Activated CD8-positive, alpha-beta T cell treated with anti-CD3 and anti-CD28 coated beads, Interleukin-2, amount 10 ng/mL, durations not matched to agents 7 days and 5 days (primary cell): ENCODE measurements at regions of chr12 and their contacts with region 1.

Region 1: DNA sequence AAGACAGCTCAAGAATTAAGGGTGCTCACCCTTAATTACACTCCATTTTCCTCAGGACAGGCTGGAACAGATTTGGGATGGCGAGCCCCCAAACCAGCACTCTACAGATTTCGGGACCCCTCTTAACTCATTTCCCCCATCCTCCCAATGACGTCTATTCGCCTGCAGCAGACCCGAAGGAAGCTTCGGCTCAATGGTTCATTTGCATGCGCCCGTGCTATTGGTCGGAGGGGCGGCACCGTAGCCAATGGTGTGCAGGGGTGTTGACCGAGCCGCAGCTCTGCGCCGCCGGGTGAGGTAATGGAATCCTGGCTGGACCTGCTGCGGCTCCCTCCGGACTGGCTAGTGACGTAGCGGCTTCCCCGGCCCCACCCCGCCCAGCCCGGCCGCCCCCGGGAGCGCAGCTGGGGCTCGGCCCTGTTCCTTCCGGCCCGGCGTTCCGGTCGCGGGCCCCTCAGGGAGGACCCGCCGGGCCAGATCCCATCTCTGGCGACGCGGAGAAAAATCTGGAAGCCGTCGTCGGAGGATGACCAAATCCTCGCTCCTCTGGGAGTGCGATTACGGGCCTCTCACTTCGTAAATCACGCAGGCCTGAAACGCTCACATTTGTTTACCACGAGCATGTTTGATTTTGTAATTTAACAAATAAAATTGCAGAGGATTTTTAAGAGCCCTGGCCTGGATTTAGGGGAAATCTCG is 18.3 kb upstream of the NR4A1 start:
- DNase-seq: peak; percentile 95
- ATAC-seq: peak; percentile 91
- H3K4me3 Mint-ChIP-seq: peak overlapping the region; percentile 73
- H3K27ac Mint-ChIP-seq: peak overlapping the region; percentile 84
- H3K4me1 Mint-ChIP-seq: peaks cover 39% of the 10 kb centered on the region
- H3K27me3 Mint-ChIP-seq: peaks cover 11% of the 10 kb centered on the region

Region 2: DNA sequence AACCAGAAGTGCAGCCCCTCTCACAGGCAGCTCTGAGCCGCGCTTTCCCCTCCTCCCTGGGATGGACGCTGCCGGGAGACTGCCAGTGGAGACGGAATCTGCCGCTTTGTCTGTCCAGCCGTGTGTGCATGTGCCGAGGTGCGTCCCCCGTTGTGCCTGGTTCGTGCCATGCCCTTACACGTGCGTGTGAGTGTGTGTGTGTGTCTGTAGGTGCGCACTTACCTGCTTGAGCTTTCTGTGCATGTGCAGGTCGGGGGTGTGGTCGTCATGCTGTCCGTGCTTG is 38.5 kb before region 1 on chr12:
- CTCF ChIA-PET with region 1: interaction called, 11 read pairs
- POLR2A ChIA-PET with region 1: no interaction called
- DNase-seq: no peak
- ATAC-seq: no peak
- H3K4me3 Mint-ChIP-seq: no peak overlapping the region
- H3K27ac Mint-ChIP-seq: no peak overlapping the region
- H3K4me1 Mint-ChIP-seq: peaks cover 7% of the 10 kb centered on the region
- H3K27me3 Mint-ChIP-seq: no peaks in the 10 kb centered on the region

Region 3: GRCh38 chr12:52050761-52051541 is 18.0 kb after region 1 on chr12 and contains the start of gene NR4A1:
- CTCF ChIA-PET with region 1: interaction called, 290 read pairs
- POLR2A ChIA-PET with region 1: interaction called, 10 read pairs
- DNase-seq: peak; percentile 98
- ATAC-seq: peak; percentile 85
- H3K4me3 Mint-ChIP-seq: peak within 1 kb of the TSS; percentile 86
- H3K27ac Mint-ChIP-seq: peak within 1 kb of the TSS; percentile 98
- H3K4me1 Mint-ChIP-seq: peaks cover 49% of the 10 kb centered on the region
- H3K27me3 Mint-ChIP-seq: no peaks in the 10 kb centered on the region
- total RNA-seq, gene NR4A1: 4.3 to 5.6 TPM

Region 4: GRCh38 chr12:52069327-52070184 is 36.6 kb after region 1 on chr12 and contains the start of gene ATG101:
- CTCF ChIA-PET with region 1: interaction called, 424 read pairs
- POLR2A ChIA-PET with region 1: interaction called, 3 read pairs
- DNase-seq: peak; percentile 92
- ATAC-seq: peak; percentile 97
- H3K4me3 Mint-ChIP-seq: peak within 1 kb of the TSS; percentile 93
- H3K27ac Mint-ChIP-seq: peak within 1 kb of the TSS; percentile 99
- H3K4me1 Mint-ChIP-seq: peaks cover 54% of the 10 kb centered on the region
- H3K27me3 Mint-ChIP-seq: peaks cover 6% of the 10 kb centered on the region
- total RNA-seq, gene ATG101: 28.8 to 31.1 TPM

Region 5: GRCh38 chr12:52082988-52083637 is 50.2 kb after region 1 on chr12:
- CTCF ChIA-PET with region 1: interaction called, 486 read pairs
- POLR2A ChIA-PET with region 1: interaction called, 3 read pairs
- DNase-seq: peak; percentile 78
- ATAC-seq: peak; percentile 83
- H3K4me3 Mint-ChIP-seq: no peak overlapping the region
- H3K27ac Mint-ChIP-seq: no peak overlapping the region
- H3K4me1 Mint-ChIP-seq: peaks cover 18% of the 10 kb centered on the region
- H3K27me3 Mint-ChIP-seq: peaks cover 8% of the 10 kb centered on the region

Region 6: GRCh38 chr12:52121824-52122539 is 89.0 kb after region 1 on chr12:
- CTCF ChIA-PET with region 1: interaction called, 11 read pairs
- POLR2A ChIA-PET with region 1: no interaction called
- DNase-seq: peak; percentile 79
- ATAC-seq: no peak
- H3K4me3 Mint-ChIP-seq: no peak overlapping the region
- H3K27ac Mint-ChIP-seq: no peak overlapping the region
- H3K4me1 Mint-ChIP-seq: peaks cover 26% of the 10 kb centered on the region
- H3K27me3 Mint-ChIP-seq: peaks cover 12% of the 10 kb centered on the region